Activated B cell treated with CpG ODN at 0.5 μM for 24 hours (primary cell): ENCODE measurements at regions of chr3 and their contacts with region 1.

Region 1: GRCh38 chr3:107064445-107065060 is 312.7 kb upstream of the CCDC54 start:
- DNase-seq: no peak
- ATAC-seq: peak; percentile 78
- H3K4me3 Mint-ChIP-seq: no peak overlapping the region
- H3K27ac Mint-ChIP-seq: no peak overlapping the region
- H3K4me1 Mint-ChIP-seq: peaks cover 4% of the 10 kb centered on the region
- H3K27me3 Mint-ChIP-seq: peaks cover 3% of the 10 kb centered on the region
- CTCF ChIP-seq: peak; percentile 63

Region 2: DNA sequence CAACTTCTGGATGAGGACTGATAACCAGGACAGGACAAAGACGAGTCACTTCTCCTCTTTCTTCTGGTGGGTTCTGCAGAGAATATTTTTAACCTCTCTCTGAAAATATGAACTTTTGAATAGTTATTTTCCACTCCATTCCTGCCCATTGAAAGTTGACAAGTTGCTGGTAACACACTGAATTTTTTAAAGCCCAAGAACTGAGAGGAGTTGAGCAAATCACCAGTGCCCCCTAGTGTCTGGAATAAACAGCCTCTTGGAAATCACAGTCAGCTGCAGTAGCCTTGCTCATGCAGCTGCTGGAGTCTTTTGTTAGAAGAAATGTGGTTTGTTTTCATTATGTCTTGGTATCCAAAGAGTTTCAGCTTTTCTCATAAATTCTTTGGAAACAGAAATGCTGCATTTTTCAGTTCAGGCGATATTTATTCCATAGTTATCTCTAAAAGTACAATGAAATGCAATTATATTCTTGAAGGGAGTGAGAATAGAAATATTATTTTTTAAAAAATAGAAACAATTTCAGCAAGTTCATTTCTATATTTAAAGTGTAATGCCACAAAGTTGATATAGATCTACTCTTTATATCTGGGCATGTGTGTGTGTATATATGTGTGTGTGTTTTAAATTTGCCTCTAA is 454.8 kb before region 1 on chr3:
- CTCF ChIA-PET with region 1: no interaction called
- POLR2A ChIA-PET with region 1: no interaction called
- intact Hi-C with region 1: loop called (anchors 10 kb)
- DNase-seq: no peak
- ATAC-seq: peak; percentile 64
- H3K4me3 Mint-ChIP-seq: no peak overlapping the region
- H3K27ac Mint-ChIP-seq: no peak overlapping the region
- H3K4me1 Mint-ChIP-seq: no peaks in the 10 kb centered on the region
- H3K27me3 Mint-ChIP-seq: no peaks in the 10 kb centered on the region
- CTCF ChIP-seq: peak; percentile 87

Region 3: GRCh38 chr3:106963442-106963841 is 101.1 kb before region 1 on chr3:
- CTCF ChIA-PET with region 1: no interaction called
- POLR2A ChIA-PET with region 1: no interaction called
- intact Hi-C with region 1: no loop called
- DNase-seq: no peak
- ATAC-seq: no peak
- H3K4me3 Mint-ChIP-seq: no peak overlapping the region
- H3K27ac Mint-ChIP-seq: no peak overlapping the region
- H3K4me1 Mint-ChIP-seq: no peaks in the 10 kb centered on the region
- H3K27me3 Mint-ChIP-seq: no peaks in the 10 kb centered on the region
- CTCF ChIP-seq: no peak